ENCODE measurements at regions of chr16 and their contacts with region 1.

Region 1: DNA sequence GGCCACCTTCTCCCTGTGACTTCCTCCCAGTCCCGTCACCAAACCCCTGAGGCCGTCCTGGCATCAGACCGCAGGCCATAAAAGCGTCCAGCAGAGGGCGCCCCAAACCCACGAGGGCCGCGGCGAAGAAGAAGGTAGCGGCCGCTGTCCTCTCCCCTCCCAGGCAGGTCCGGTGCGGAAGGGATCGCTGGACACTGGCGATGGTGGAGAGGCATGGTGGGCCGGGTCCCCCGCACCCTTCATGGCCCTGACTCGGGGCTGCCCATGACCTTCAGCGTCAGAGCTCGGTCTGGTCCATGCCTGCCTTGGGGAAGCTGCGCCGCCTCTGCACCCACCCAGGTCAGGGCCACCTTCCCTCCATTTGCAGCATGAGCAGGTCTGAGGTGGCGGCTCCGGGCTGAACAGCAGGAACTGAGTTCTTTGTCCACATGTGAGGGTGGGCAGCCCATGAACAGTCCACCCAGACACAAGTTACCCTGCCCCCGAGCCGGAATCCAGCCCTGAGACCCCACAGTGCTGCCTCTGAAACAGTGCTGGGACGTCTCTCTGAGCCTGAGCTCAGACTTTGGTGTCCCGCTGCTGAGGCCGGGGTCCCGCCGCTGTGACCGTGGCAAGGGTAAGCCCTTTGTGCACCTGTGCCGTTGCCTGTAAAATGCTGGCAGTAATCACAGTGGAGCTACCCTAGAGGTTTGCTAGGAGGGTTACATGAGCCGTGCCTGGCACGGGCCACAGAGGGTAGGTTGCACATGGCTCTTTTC is 40.8 kb upstream of the CMIP start:
- DNase-seq: peak; percentile 93 to 94 (median 94)
- ATAC-seq: peak; percentile 99
- H3K4me3 ChIP-seq: peak overlapping the region; percentile 31
- H3K27ac ChIP-seq: no peak overlapping the region
- H3K4me1 ChIP-seq: peaks cover 6 to 9% of the 10 kb centered on the region in 2 experiments; a peak in 4 of 5 replicates
- H3K27me3 ChIP-seq: peaks cover 3 to 19% of the 10 kb centered on the region in 2 experiments; a peak in 4 of 5 replicates
- CTCF ChIP-seq: peak; percentile 96 to 98 (median 98)
- EP300 ChIP-seq: no peak
- POLR2A ChIP-seq: no peak
- RAD21 ChIP-seq: peak; percentile 99 to 100

Region 2: GRCh38 chr16:81493755-81494433 is 90.1 kb after region 1 on chr16:
- CTCF ChIA-PET with region 1: no interaction called
- POLR2A ChIA-PET with region 1: no interaction called
- in situ Hi-C with region 1: no loop called
- intact Hi-C with region 1: loop called (anchors 1 kb)
- DNase-seq: peak; percentile 80 to 85 (median 82)
- ATAC-seq: peak; percentile 59
- H3K4me3 ChIP-seq: no peak overlapping the region
- H3K27ac ChIP-seq: peak overlapping the region; percentile 97
- H3K4me1 ChIP-seq: peaks cover 63 to 69% of the 10 kb centered on the region in 2 experiments
- H3K27me3 ChIP-seq: no peaks in the 10 kb centered on the region
- CTCF ChIP-seq: no peak
- EP300 ChIP-seq: no peak
- POLR2A ChIP-seq: no peak
- RAD21 ChIP-seq: no peak

Region 3: GRCh38 chr16:81585785-81586184 is 182.0 kb after region 1 on chr16:
- CTCF ChIA-PET with region 1: interaction called, 15 read pairs
- POLR2A ChIA-PET with region 1: no interaction called
- in situ Hi-C with region 1: no loop called
- intact Hi-C with region 1: no loop called
- DNase-seq: peak; percentile 42 to 73 (median 62)
- ATAC-seq: peak; percentile 66
- H3K4me3 ChIP-seq: no peak overlapping the region
- H3K27ac ChIP-seq: no peak overlapping the region
- H3K4me1 ChIP-seq: peaks cover 7 to 15% of the 10 kb centered on the region in 2 experiments; a peak in 4 of 5 replicates
- H3K27me3 ChIP-seq: no peaks in the 10 kb centered on the region
- CTCF ChIP-seq: peak; percentile 47 to 77 (median 68); a peak in 5 of 6 replicates
- EP300 ChIP-seq: no peak
- POLR2A ChIP-seq: no peak
- RAD21 ChIP-seq: peak in 1 of 2 experiments; percentile 31; a peak in 1 of 4 replicates

Region 4: DNA sequence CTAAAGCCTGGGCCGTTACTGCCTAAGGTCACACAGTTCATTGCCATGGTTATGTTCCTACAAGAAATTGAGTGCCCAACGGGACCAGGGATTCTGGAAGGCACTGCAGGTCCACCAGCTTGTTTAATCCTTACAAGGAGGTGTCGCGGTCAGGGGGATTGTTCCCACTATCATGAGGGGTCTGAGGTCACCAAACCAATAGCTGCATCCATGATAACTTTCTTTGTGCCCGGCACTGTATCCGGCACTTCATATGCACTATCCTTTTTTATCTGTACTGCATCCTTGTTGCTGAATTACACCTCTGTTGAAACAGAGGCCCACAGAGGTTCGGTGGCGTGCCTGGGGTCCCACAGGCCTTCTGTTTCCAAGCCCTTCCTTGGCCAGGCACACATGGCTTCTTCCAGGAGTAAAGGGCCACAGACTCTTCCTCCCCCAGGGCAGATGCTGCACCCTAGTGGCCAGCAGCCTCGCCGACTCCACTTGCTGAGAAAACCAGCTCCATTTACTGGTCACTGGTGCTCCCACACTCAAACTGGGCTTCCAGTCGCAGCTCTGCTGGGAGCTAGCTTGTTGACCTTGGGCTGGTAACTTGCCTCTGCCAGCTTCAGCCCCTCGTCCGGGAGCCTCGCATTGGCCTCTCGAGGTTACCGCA is 293.3 kb after region 1 on chr16:
- CTCF ChIA-PET with region 1: interaction called, 11 read pairs
- POLR2A ChIA-PET with region 1: interaction called, 4 read pairs
- in situ Hi-C with region 1: no loop called
- intact Hi-C with region 1: loop called (anchors 1 kb)
- DNase-seq: peak; percentile 57 to 83 (median 74)
- ATAC-seq: peak; percentile 93
- H3K4me3 ChIP-seq: no peak overlapping the region
- H3K27ac ChIP-seq: no peak overlapping the region; the same call in 2 of the 3 replicates
- H3K4me1 ChIP-seq: peaks cover 2 to 18% of the 10 kb centered on the region in 2 experiments; a peak in 4 of 5 replicates
- H3K27me3 ChIP-seq: no peaks in the 10 kb centered on the region
- CTCF ChIP-seq: peak; percentile 90 to 96 (median 94)
- EP300 ChIP-seq: no peak; the same call in 1 of the 2 replicates
- POLR2A ChIP-seq: no peak
- RAD21 ChIP-seq: peak; percentile 83 to 92

Region 5: DNA sequence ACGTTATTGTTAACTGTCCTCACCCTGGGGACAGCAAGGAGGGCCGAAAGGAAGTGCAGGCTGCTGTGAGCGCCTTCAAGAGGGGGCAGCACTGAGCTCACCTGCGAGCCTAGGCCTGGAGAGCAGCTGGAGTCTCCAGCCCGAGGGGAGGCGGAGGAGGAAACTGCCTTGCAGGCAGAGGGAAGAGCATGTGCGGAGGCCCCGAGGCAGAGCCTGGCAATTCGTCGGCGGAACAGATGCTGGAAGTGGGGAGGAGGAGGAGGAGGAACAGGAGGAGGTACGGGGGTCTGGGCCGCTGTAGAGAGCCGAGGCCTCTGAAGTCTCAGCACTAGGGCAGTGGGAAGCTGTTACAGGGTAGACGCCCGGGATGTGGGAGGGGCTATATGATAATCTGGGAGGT is 325.7 kb after region 1 on chr16:
- CTCF ChIA-PET with region 1: interaction called, 3 read pairs
- POLR2A ChIA-PET with region 1: interaction called, 3 read pairs
- in situ Hi-C with region 1: loop called (anchors 5 kb)
- intact Hi-C with region 1: no loop called
- DNase-seq: no peak
- ATAC-seq: peak; percentile 13
- H3K4me3 ChIP-seq: no peak overlapping the region
- H3K27ac ChIP-seq: no peak overlapping the region
- H3K4me1 ChIP-seq: peaks cover 7 to 14% of the 10 kb centered on the region in 2 experiments; a peak in 3 of 5 replicates
- H3K27me3 ChIP-seq: peaks cover 8 to 22% of the 10 kb centered on the region in 2 experiments; a peak in 4 of 5 replicates
- CTCF ChIP-seq: no peak
- EP300 ChIP-seq: no peak
- POLR2A ChIP-seq: no peak
- RAD21 ChIP-seq: no peak

Region 6: DNA sequence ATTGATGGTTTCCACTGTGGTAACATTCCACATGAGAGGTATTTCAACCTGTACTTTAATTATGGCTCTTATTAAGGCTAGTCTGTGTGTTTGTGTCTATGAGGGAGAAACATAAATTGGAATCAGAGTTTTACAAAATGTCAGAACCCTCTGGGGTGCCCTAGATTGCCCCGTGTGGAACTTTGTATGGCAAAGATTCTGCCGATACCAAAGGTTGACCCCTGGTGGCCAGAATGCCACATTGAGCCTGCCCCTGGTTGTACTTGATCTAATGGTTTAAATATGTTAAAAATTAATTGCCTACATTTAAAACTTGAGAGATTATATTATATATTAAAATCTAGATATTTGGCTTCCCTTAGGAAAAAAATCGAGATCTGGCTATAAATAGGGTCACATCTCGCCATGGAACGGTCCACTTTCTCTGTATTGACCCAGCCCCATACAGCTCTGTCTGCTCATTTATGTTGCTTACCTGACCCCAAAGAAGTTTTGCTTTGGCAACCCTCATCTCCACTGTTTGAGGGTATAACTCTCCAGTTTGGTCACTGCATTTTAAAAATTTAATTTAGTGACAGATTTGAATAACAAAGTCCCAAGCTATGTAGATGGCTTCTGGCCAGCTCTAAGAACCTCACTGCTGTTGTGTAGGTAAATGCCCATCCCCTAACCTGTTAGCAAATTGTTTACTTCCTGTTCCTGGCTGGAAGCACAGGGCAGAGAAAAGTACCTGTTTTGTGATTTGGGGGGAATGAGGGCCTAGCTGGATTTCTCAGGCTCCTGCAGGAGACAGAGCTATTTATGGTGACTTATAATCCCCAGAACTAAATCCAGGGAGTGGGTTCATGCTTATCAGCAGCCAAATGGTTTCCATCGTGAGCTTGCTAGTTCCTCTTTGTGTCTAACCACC is 470.3 kb after region 1 on chr16:
- CTCF ChIA-PET with region 1: no interaction called
- POLR2A ChIA-PET with region 1: no interaction called
- in situ Hi-C with region 1: no loop called
- intact Hi-C with region 1: loop called (anchors 10 kb)
- DNase-seq: peak; percentile 65 to 73 (median 70)
- ATAC-seq: peak; percentile 96
- H3K4me3 ChIP-seq: no peak overlapping the region
- H3K27ac ChIP-seq: no peak overlapping the region
- H3K4me1 ChIP-seq: 0 out of 5 replicates have a peak, but pooled peaks cover 0 to 5% of the 10 kb centered on the region in 2 experiments
- H3K27me3 ChIP-seq: peaks cover 16 to 45% of the 10 kb centered on the region in 2 experiments
- CTCF ChIP-seq: peak; percentile 90 to 97 (median 94)
- EP300 ChIP-seq: no peak
- POLR2A ChIP-seq: no peak
- RAD21 ChIP-seq: peak; percentile 75 to 88